Naive thymus-derived CD4-positive, alpha-beta T cell (primary cell): ENCODE measurements at regions of chr3 and their contacts with region 1.

Region 1: GRCh38 chr3:129627429-129628168 is 21.1 kb upstream of the PLXND1 start:
- DNase-seq: peak in 8 of 9 donors; percentile 43 to 77 (median 70)
- ATAC-seq: peak; percentile 78
- H3K4me3 ChIP-seq: peak overlapping the region; percentile 67
- H3K4me3 Mint-ChIP-seq: peak overlapping the region; percentile 87 to 93 (median 90)
- H3K27ac ChIP-seq: peak overlapping the region; percentile 51
- H3K27ac Mint-ChIP-seq: peak overlapping the region in 8 of 9 donors; percentile 2 to 86 (median 82)
- H3K4me1 ChIP-seq: peaks cover 5 to 9% of the 10 kb centered on the region in 2 donors
- H3K4me1 Mint-ChIP-seq: peaks cover 5 to 25% (median 17%) of the 10 kb centered on the region in 7 donors
- H3K27me3 ChIP-seq: no peaks in the 10 kb centered on the region
- H3K27me3 Mint-ChIP-seq: peaks cover 0 to 2% (median 0%) of the 10 kb centered on the region in 5 donors

Region 2: DNA sequence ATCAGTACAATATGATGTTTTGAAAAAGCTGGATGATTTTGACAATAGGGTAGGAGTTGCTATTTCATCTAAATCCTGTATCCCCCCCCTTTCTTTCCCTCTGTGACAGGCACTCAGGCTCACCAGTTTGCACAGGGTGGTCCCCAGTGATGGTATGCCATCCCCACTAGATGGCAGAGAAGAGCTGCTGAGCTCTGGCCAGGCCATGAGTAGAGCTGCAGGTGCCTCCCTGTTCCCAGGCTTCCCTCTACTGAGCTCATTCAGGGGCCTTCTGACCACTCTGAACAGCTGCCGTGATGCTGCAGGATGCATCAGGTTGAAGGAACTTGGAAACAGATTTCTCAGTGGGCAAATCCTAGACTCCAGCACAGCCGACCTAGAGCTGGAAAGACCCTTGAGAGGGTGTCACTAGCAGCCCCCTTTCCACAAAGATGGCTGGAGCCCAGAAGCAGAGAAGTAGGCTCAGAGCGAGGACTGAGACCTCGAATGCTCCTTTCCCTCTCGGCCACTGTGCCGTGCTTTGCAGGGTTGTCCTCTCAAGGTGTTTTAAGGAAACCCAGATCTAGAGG is 244.2 kb before region 1 on chr3:
- CTCF ChIA-PET with region 1: no interaction called
- POLR2A ChIA-PET with region 1: no interaction called
- intact Hi-C with region 1: loop called in 1 of 2 experiments (anchors 1 kb)
- DNase-seq: peak in 7 of 9 donors; percentile 21 to 40 (median 30)
- ATAC-seq: peak; percentile 92
- H3K4me3 ChIP-seq: no peak overlapping the region
- H3K4me3 Mint-ChIP-seq: no peak overlapping the region
- H3K27ac ChIP-seq: no peak overlapping the region
- H3K27ac Mint-ChIP-seq: peak overlapping the region in 2 of 9 donors; percentile 49 to 92
- H3K4me1 ChIP-seq: no peaks in the 10 kb centered on the region
- H3K4me1 Mint-ChIP-seq: peaks cover 0 to 4% (median 0%) of the 10 kb centered on the region in 7 donors
- H3K27me3 ChIP-seq: no peaks in the 10 kb centered on the region
- H3K27me3 Mint-ChIP-seq: no peaks in the 10 kb centered on the region

Region 3: GRCh38 chr3:129576514-129577352 is 50.9 kb before region 1 on chr3:
- CTCF ChIA-PET with region 1: no interaction called
- POLR2A ChIA-PET with region 1: no interaction called
- intact Hi-C with region 1: loop called in 1 of 2 experiments (anchors 5 kb)
- DNase-seq: peak in 8 of 9 donors; percentile 27 to 81 (median 70)
- ATAC-seq: peak; percentile 84
- H3K4me3 ChIP-seq: peak overlapping the region; percentile 15
- H3K4me3 Mint-ChIP-seq: peak overlapping the region; percentile 16 to 65 (median 48)
- H3K27ac ChIP-seq: peak overlapping the region; percentile 14
- H3K27ac Mint-ChIP-seq: peak overlapping the region; percentile 67 to 96 (median 89)
- H3K4me1 ChIP-seq: peaks cover 20 to 50% of the 10 kb centered on the region in 2 donors
- H3K4me1 Mint-ChIP-seq: peaks cover 4 to 29% (median 20%) of the 10 kb centered on the region in 7 donors
- H3K27me3 ChIP-seq: no peaks in the 10 kb centered on the region
- H3K27me3 Mint-ChIP-seq: no peaks in the 10 kb centered on the region

Region 4: DNA sequence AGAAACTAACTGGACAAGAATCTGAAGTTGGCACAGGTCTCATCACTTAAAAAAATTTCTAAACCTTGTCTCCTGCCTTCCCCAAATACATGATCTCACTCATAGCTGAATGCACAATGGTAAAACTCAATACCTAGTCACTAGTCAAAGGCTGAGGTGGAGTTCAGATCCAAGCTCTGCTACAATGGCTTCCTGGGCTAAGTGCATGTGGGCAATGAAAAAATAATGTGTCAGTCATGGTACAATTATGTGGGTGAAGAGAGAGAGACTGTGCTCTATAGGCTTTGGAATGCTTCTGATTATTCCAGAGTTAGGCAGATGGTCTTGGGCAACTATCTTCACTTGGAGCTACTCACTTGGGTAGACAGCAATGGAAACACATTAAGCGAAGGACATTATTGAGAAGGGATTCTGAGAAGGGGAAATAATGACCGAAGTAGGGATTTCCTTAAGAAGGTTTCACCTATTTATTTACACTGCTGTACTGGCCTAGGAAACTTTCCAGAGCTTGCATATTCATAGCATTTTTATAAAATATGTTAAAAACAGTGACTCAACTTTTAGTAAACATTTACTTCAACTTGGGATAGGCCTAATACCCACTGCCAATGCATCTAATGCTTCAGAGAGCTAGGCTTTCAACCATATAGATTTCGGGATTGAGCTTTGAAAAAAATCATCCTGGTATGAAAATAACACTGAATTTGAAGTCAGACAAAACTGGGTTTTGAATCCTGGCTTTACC is 37.6 kb after region 1 on chr3:
- CTCF ChIA-PET with region 1: no interaction called
- POLR2A ChIA-PET with region 1: no interaction called
- intact Hi-C with region 1: loop called in 1 of 2 experiments (anchors 1 kb)
- DNase-seq: no peak
- ATAC-seq: no peak
- H3K4me3 ChIP-seq: no peak overlapping the region
- H3K4me3 Mint-ChIP-seq: no peak overlapping the region
- H3K27ac ChIP-seq: no peak overlapping the region
- H3K27ac Mint-ChIP-seq: no peak overlapping the region
- H3K4me1 ChIP-seq: no peaks in the 10 kb centered on the region
- H3K4me1 Mint-ChIP-seq: peaks cover 0 to 18% (median 8%) of the 10 kb centered on the region in 7 donors
- H3K27me3 ChIP-seq: no peaks in the 10 kb centered on the region
- H3K27me3 Mint-ChIP-seq: no peaks in the 10 kb centered on the region

Region 5: GRCh38 chr3:129934234-129935123 is 306.9 kb after region 1 on chr3:
- CTCF ChIA-PET with region 1: interaction called, 7 read pairs
- POLR2A ChIA-PET with region 1: no interaction called
- intact Hi-C with region 1: loop called (anchors 1 kb)
- DNase-seq: peak in 6 of 9 donors; percentile 18 to 46 (median 26)
- ATAC-seq: peak; percentile 66
- H3K4me3 ChIP-seq: no peak overlapping the region
- H3K4me3 Mint-ChIP-seq: peak overlapping the region in 4 of 10 donors; percentile 10 to 67 (median 27)
- H3K27ac ChIP-seq: no peak overlapping the region
- H3K27ac Mint-ChIP-seq: no peak overlapping the region
- H3K4me1 ChIP-seq: peaks cover 0 to 3% of the 10 kb centered on the region in 2 donors
- H3K4me1 Mint-ChIP-seq: peaks cover 4 to 10% (median 7%) of the 10 kb centered on the region in 7 donors
- H3K27me3 ChIP-seq: no peaks in the 10 kb centered on the region
- H3K27me3 Mint-ChIP-seq: peaks cover 3 to 16% (median 4%) of the 10 kb centered on the region in 5 donors

Region 6: DNA sequence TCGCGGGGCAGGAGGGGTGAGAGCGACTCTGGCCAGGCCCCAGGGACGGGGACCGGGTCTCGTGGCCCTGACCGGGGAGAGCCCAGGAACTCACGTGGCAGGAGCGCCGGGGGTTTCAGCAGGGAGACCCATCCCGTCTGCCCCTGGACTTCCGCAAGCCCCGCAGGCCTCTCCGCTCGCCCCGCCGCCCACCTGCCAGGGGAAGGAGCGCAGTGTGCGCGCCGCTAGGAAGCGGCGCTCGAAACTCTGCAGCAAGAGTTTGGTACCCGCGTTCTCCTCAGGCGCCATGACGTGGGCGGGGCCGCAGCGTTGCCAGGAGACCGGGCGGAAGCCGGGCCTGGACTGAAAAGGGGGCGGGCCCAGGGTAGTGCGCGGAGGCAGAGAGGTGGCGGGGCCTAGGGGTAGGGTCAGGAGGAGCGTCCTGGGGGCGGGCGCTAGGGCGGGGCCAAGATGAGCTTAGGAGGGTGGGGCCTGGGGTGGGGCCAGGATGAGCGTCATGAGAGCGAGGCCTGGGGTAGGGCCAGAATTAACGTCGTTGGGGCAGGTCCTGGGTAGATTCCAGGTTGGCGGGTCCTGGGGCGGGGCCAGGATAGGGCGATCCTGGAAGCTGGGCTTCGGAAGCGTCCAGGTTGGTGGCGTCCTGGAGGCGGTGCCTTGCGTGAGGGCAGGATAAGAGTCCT is 483.7 kb after region 1 on chr3:
- CTCF ChIA-PET with region 1: no interaction called
- POLR2A ChIA-PET with region 1: no interaction called
- intact Hi-C with region 1: loop called (anchors 5 kb)
- DNase-seq: peak; percentile 96 to 99 (median 98)
- ATAC-seq: peak; percentile 100
- H3K4me3 ChIP-seq: peak overlapping the region; percentile 58
- H3K4me3 Mint-ChIP-seq: peak overlapping the region; percentile 85 to 100 (median 98)
- H3K27ac ChIP-seq: peak overlapping the region; percentile 90
- H3K27ac Mint-ChIP-seq: peak overlapping the region; percentile 91 to 100 (median 100)
- H3K4me1 ChIP-seq: no peaks in the 10 kb centered on the region
- H3K4me1 Mint-ChIP-seq: peaks cover 11 to 22% (median 13%) of the 10 kb centered on the region in 7 donors
- H3K27me3 ChIP-seq: no peaks in the 10 kb centered on the region
- H3K27me3 Mint-ChIP-seq: peaks cover 0 to 14% (median 0%) of the 10 kb centered on the region in 5 donors